CD14-positive monocyte (primary cell): ENCODE measurements at regions of chr17 and their contacts with region 1.

Region 1: DNA sequence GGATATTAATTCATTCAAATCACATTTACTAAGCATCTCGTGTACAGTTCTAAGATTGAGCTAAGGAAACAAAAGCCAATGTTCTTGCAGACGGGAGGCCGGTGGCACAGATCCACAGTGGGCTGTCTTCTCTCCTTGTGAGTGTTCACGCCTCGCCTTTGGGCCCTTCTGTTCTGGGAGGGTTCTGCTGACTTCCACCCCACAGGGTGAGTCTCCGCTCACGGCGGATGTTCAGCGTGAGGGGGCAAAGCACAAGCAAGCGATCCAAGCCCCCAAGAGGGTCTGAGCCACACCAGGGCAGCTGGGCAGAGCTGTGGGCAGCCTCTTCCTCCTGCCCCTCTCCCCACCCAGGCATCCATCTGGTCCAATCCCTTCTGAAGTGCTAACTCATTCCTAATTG is 84.3 kb upstream of the DOC2B start:
- DNase-seq: no peak
- H3K4me3 ChIP-seq: no peak overlapping the region
- H3K4me3 Mint-ChIP-seq: no peak overlapping the region
- H3K27ac ChIP-seq: no peak overlapping the region
- H3K27ac Mint-ChIP-seq: peak overlapping the region in 1 of 7 donors; percentile 58
- H3K4me1 ChIP-seq: no peaks in the 10 kb centered on the region
- H3K4me1 Mint-ChIP-seq: no peaks in the 10 kb centered on the region
- H3K27me3 ChIP-seq: no peaks in the 10 kb centered on the region
- H3K27me3 Mint-ChIP-seq: peaks cover 9 to 10% (median 9%) of the 10 kb centered on the region in 3 donors
- CTCF ChIP-seq: no peak

Region 2: GRCh38 chr17:247767-248166 is 18.0 kb before region 1 on chr17:
- intact Hi-C with region 1: loop called in 1 of 2 experiments (anchors 2 kb)
- DNase-seq: no peak
- H3K4me3 ChIP-seq: no peak overlapping the region
- H3K4me3 Mint-ChIP-seq: no peak overlapping the region
- H3K27ac ChIP-seq: no peak overlapping the region
- H3K27ac Mint-ChIP-seq: peak overlapping the region in 2 of 7 donors; percentile 25 to 51
- H3K4me1 ChIP-seq: no peaks in the 10 kb centered on the region
- H3K4me1 Mint-ChIP-seq: peaks cover 5% of the 10 kb centered on the region
- H3K27me3 ChIP-seq: no peaks in the 10 kb centered on the region
- H3K27me3 Mint-ChIP-seq: peaks cover 2 to 5% (median 3%) of the 10 kb centered on the region in 3 donors
- CTCF ChIP-seq: no peak

Region 3: GRCh38 chr17:292531-293382 is 27.0 kb after region 1 on chr17:
- intact Hi-C with region 1: no loop called
- DNase-seq: no peak
- H3K4me3 ChIP-seq: peak overlapping the region in 1 of 3 experiments; percentile 12
- H3K4me3 Mint-ChIP-seq: peak overlapping the region; percentile 63 to 78
- H3K27ac ChIP-seq: no peak overlapping the region
- H3K27ac Mint-ChIP-seq: no peak overlapping the region
- H3K4me1 ChIP-seq: peaks cover 0 to 9% of the 10 kb centered on the region in 2 donors
- H3K4me1 Mint-ChIP-seq: peaks cover 30% of the 10 kb centered on the region
- H3K27me3 ChIP-seq: peaks cover 0 to 2% of the 10 kb centered on the region in 2 donors
- H3K27me3 Mint-ChIP-seq: peaks cover 18 to 28% (median 20%) of the 10 kb centered on the region in 3 donors
- CTCF ChIP-seq: no peak

Region 4: GRCh38 chr17:320809-321653 is 55.3 kb after region 1 on chr17:
- intact Hi-C with region 1: no loop called
- DNase-seq: no peak
- H3K4me3 ChIP-seq: no peak overlapping the region
- H3K4me3 Mint-ChIP-seq: no peak overlapping the region
- H3K27ac ChIP-seq: no peak overlapping the region
- H3K27ac Mint-ChIP-seq: no peak overlapping the region
- H3K4me1 ChIP-seq: no peaks in the 10 kb centered on the region
- H3K4me1 Mint-ChIP-seq: no peaks in the 10 kb centered on the region
- H3K27me3 ChIP-seq: no peaks in the 10 kb centered on the region
- H3K27me3 Mint-ChIP-seq: peaks cover 1 to 9% (median 3%) of the 10 kb centered on the region in 3 donors
- CTCF ChIP-seq: no peak